Aorta (tissue), 5 donors: ENCODE measurements at regions of chr15 and their contacts with region 1.

Region 1: DNA sequence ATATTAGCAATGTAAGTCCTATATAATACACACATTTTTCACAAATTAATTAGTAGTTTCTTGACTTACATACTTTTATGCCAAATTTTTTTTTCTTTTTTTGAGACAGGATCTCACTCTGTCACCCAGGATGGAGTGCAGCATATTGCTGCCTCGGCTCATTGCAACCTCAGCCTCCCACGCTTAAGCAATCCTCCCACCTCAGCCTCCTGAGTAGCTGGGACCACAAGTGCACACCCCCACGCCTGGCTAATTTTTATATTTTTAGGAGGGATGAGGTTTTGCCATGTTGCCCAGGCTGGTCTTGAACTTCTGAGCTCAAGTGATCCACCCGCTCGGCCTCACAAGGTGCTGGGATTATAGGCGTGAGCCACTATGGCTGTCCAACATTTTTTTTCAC is 54.6 kb downstream of the RNF111 start:
- DNase-seq: no peak
- ATAC-seq: no peak
- H3K4me3 ChIP-seq: no peak overlapping the region
- H3K27ac ChIP-seq: no peak overlapping the region
- H3K4me1 ChIP-seq: peaks cover 0 to 6% of the 10 kb centered on the region in 2 donors
- H3K27me3 ChIP-seq: no peaks in the 10 kb centered on the region

Region 2: GRCh38 chr15:58999694-59000093 is 42.3 kb before region 1 on chr15:
- intact Hi-C with region 1: loop called in 1 of 2 experiments (anchors 10 kb)
- DNase-seq: no peak
- ATAC-seq: no peak
- H3K4me3 ChIP-seq: no peak overlapping the region
- H3K27ac ChIP-seq: no peak overlapping the region
- H3K4me1 ChIP-seq: no peaks in the 10 kb centered on the region
- H3K27me3 ChIP-seq: no peaks in the 10 kb centered on the region